ENCODE measurements at regions of chr2 and their contacts with region 1.

Region 1: GRCh38 chr2:131673392-131674173 is 145.9 kb downstream of the CCDC74A start:
- DNase-seq: peak; percentile 88 to 93
- ATAC-seq: peak; percentile 94
- H3K4me3 ChIP-seq: peak overlapping the region in 1 of 2 donors; percentile 9
- H3K27ac ChIP-seq: no peak overlapping the region
- H3K4me1 ChIP-seq: no peaks in the 10 kb centered on the region
- H3K27me3 ChIP-seq: no peaks in the 10 kb centered on the region

Region 2: DNA sequence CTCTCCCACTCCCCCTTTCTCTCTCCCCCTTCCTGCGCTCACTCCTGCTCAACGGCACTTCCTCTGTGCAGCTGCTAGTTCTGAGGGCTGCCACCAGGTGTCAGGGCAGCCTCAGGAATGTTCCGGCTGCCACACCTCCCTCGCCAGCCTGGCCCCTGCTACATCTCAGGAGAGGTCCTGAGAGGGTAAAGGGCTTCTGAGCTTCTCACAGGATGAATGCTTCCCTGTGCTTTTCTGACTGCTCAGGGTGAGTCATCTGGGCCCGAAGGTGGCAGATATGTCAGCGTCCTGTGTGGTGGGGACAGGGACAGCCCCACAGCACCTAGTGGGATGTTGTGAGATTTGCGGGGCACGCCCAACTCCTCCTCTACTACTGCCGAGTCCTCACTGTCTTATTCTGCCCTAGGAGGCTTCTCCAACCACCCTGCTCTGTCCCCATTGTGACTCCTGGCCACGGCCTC is 519.5 kb before region 1 on chr2:
- intact Hi-C with region 1: loop called (anchors 5 to 10 kb)
- DNase-seq: peak in 1 of 2 donors; percentile 80
- ATAC-seq: peak; percentile 68
- H3K4me3 ChIP-seq: no peak overlapping the region
- H3K27ac ChIP-seq: no peak overlapping the region
- H3K4me1 ChIP-seq: no peaks in the 10 kb centered on the region
- H3K27me3 ChIP-seq: no peaks in the 10 kb centered on the region

Region 3: GRCh38 chr2:131413148-131413747 is 260.3 kb before region 1 on chr2:
- intact Hi-C with region 1: loop called in 1 of 2 experiments (anchors 10 kb)
- DNase-seq: no peak
- ATAC-seq: no peak
- H3K4me3 ChIP-seq: no peak overlapping the region
- H3K27ac ChIP-seq: no peak overlapping the region
- H3K4me1 ChIP-seq: no peaks in the 10 kb centered on the region
- H3K27me3 ChIP-seq: peaks cover 0 to 1% of the 10 kb centered on the region in 2 donors

Region 4: GRCh38 chr2:131801210-131801744 is 127.7 kb after region 1 on chr2:
- intact Hi-C with region 1: loop called (anchors 5 to 10 kb)
- DNase-seq: no peak
- ATAC-seq: no peak
- H3K4me3 ChIP-seq: no peak overlapping the region
- H3K27ac ChIP-seq: no peak overlapping the region
- H3K4me1 ChIP-seq: no peaks in the 10 kb centered on the region
- H3K27me3 ChIP-seq: no peaks in the 10 kb centered on the region